ENCODE measurements at regions of chr5 and their contacts with region 1.

Region 1: GRCh38 chr5:159456722-159457465 is 126.6 kb upstream of the IL12B start:
- DNase-seq: peak; percentile 96
- ATAC-seq: peak; percentile 70
- H3K4me3 ChIP-seq: peak overlapping the region; percentile 14; the same call in 1 of the 2 replicates
- H3K27ac ChIP-seq: peak overlapping the region; percentile 41
- H3K4me1 ChIP-seq: peaks cover 58% of the 10 kb centered on the region
- H3K27me3 ChIP-seq: no peaks in the 10 kb centered on the region
- CTCF ChIP-seq: no peak
- EP300 ChIP-seq: peak; percentile 97
- POLR2A ChIP-seq: no peak
- RAD21 ChIP-seq: no peak

Region 2: GRCh38 chr5:158875272-158875679 is 581.6 kb before region 1 on chr5:
- CTCF ChIA-PET with region 1: no interaction called
- POLR2A ChIA-PET with region 1: no interaction called
- RAD21 ChIA-PET with region 1: no interaction called
- SMC1A ChIA-PET with region 1: no interaction called
- in situ Hi-C with region 1: no loop called
- intact Hi-C with region 1: no loop called
- DNase-seq: no peak
- ATAC-seq: peak; percentile 54
- H3K4me3 ChIP-seq: no peak overlapping the region
- H3K27ac ChIP-seq: peak overlapping the region; percentile 71
- H3K4me1 ChIP-seq: peaks cover 55% of the 10 kb centered on the region
- H3K27me3 ChIP-seq: no peaks in the 10 kb centered on the region
- CTCF ChIP-seq: no peak
- EP300 ChIP-seq: peak; percentile 60 to 64; a peak in 2 of 4 replicates
- POLR2A ChIP-seq: no peak
- RAD21 ChIP-seq: no peak

Region 3: DNA sequence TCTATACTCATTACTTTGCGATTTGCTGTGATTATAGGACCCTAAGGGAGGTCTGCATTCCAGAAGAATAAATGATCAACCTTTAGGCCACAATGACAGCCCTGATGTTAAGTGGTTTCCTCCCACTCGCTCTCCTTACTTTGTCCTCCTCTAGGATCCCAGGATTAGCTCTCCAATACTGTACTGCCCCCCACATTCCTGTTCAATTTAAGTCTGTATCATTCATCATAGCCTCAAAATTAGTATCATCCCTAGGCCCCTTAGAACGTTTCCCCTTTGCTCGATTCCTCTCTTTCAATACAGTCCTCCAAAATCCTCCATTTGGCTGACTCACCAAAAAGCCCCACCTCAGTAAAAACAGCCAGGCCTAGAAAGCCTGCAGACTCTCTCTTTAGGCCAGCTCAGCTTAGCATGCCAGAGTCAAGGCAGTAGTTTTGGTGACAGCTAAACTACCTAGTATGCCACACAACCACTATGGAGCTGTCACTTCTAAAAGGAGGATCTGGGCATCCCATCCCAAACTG is 272.0 kb before region 1 on chr5:
- CTCF ChIA-PET with region 1: no interaction called
- POLR2A ChIA-PET with region 1: no interaction called
- RAD21 ChIA-PET with region 1: no interaction called
- SMC1A ChIA-PET with region 1: no interaction called
- in situ Hi-C with region 1: no loop called
- intact Hi-C with region 1: loop called (anchors 5 kb)
- DNase-seq: no peak
- ATAC-seq: peak; percentile 61
- H3K4me3 ChIP-seq: no peak overlapping the region
- H3K27ac ChIP-seq: peak overlapping the region; percentile 48
- H3K4me1 ChIP-seq: peaks cover 9% of the 10 kb centered on the region
- H3K27me3 ChIP-seq: no peaks in the 10 kb centered on the region
- CTCF ChIP-seq: no peak
- EP300 ChIP-seq: no peak
- POLR2A ChIP-seq: no peak
- RAD21 ChIP-seq: no peak

Region 4: GRCh38 chr5:159405611-159406031 is 51.3 kb before region 1 on chr5:
- CTCF ChIA-PET with region 1: interaction called, 9 read pairs
- POLR2A ChIA-PET with region 1: interaction called, 8 read pairs
- RAD21 ChIA-PET with region 1: interaction called, 45 read pairs
- SMC1A ChIA-PET with region 1: interaction called, 38 read pairs
- in situ Hi-C with region 1: no loop called
- intact Hi-C with region 1: loop called (anchors 1 kb)
- DNase-seq: peak; percentile 58
- ATAC-seq: peak; percentile 83
- H3K4me3 ChIP-seq: no peak overlapping the region
- H3K27ac ChIP-seq: no peak overlapping the region
- H3K4me1 ChIP-seq: peaks cover 17% of the 10 kb centered on the region
- H3K27me3 ChIP-seq: no peaks in the 10 kb centered on the region; a peak in 1 of 4 replicates
- CTCF ChIP-seq: no peak
- EP300 ChIP-seq: peak in 1 of 2 experiments; percentile 81; a peak in 1 of 4 replicates
- POLR2A ChIP-seq: no peak
- RAD21 ChIP-seq: no peak

Region 5: DNA sequence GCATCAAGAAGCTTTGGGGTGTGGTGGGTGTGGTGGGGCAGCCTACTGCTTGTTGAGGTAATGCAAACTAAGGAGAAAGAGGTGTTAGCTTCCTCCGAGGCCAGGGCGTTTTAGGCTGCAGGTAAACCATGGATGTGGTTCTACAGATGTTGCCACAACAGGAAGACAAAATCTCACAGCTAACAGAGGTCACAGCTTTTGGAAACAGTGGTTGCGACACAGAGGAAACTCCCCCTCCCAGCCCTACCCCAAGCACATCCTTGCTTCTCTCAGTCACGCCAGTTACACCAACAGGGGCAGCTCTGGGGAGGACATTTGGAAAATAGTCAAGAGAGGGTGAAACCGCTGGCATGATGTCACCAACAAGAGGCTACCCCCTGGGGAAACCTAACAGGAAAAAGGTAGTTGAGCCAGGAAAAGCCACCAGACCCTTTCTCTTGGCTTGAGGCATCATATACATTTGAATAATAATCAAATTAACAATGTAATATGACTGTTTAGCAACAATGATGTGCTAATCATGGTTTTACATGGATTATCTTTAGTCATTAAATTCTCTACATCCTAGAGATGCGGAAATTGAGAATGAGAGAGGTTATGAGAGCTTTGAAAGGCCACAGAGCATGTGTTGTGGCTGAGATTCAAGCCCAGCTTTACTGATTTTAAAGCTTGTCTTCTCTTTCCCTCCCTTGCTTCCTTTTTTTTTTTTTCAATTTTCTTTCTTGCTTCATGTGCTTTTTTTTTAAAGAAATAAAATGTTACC is 44.4 kb before region 1 on chr5:
- CTCF ChIA-PET with region 1: interaction called, 9 read pairs
- POLR2A ChIA-PET with region 1: interaction called, 6 read pairs
- RAD21 ChIA-PET with region 1: interaction called, 45 read pairs
- SMC1A ChIA-PET with region 1: interaction called, 38 read pairs
- in situ Hi-C with region 1: no loop called
- intact Hi-C with region 1: loop called (anchors 1 kb)
- DNase-seq: peak; percentile 62
- ATAC-seq: peak; percentile 87
- H3K4me3 ChIP-seq: no peak overlapping the region
- H3K27ac ChIP-seq: no peak overlapping the region
- H3K4me1 ChIP-seq: peaks cover 19% of the 10 kb centered on the region
- H3K27me3 ChIP-seq: no peaks in the 10 kb centered on the region
- CTCF ChIP-seq: no peak
- EP300 ChIP-seq: peak in 1 of 2 experiments; percentile 51; a peak in 1 of 4 replicates
- POLR2A ChIP-seq: no peak
- RAD21 ChIP-seq: no peak

Region 6: GRCh38 chr5:159427180-159428012 is 29.5 kb before region 1 on chr5:
- CTCF ChIA-PET with region 1: interaction called, 14 read pairs
- POLR2A ChIA-PET with region 1: interaction called, 16 read pairs
- RAD21 ChIA-PET with region 1: interaction called, 42 read pairs
- SMC1A ChIA-PET with region 1: interaction called, 65 read pairs
- in situ Hi-C with region 1: no loop called
- intact Hi-C with region 1: loop called (anchors 1 kb)
- DNase-seq: peak; percentile 73
- ATAC-seq: peak; percentile 79
- H3K4me3 ChIP-seq: peak overlapping the region; percentile 38; the same call in 1 of the 2 replicates
- H3K27ac ChIP-seq: peak overlapping the region; percentile 10; the same call in 1 of the 2 replicates
- H3K4me1 ChIP-seq: peaks cover 48% of the 10 kb centered on the region
- H3K27me3 ChIP-seq: no peaks in the 10 kb centered on the region
- CTCF ChIP-seq: no peak
- EP300 ChIP-seq: peak; percentile 68 to 82; a peak in 3 of 4 replicates
- POLR2A ChIP-seq: no peak
- RAD21 ChIP-seq: 0 out of 2 replicates have a peak, but pooled peaks have one; percentile 8

Measured in GM12878 (cell line).